PC-3 (cell line): ENCODE measurements at regions of chr19 and their contacts with region 1.

Region 1: DNA sequence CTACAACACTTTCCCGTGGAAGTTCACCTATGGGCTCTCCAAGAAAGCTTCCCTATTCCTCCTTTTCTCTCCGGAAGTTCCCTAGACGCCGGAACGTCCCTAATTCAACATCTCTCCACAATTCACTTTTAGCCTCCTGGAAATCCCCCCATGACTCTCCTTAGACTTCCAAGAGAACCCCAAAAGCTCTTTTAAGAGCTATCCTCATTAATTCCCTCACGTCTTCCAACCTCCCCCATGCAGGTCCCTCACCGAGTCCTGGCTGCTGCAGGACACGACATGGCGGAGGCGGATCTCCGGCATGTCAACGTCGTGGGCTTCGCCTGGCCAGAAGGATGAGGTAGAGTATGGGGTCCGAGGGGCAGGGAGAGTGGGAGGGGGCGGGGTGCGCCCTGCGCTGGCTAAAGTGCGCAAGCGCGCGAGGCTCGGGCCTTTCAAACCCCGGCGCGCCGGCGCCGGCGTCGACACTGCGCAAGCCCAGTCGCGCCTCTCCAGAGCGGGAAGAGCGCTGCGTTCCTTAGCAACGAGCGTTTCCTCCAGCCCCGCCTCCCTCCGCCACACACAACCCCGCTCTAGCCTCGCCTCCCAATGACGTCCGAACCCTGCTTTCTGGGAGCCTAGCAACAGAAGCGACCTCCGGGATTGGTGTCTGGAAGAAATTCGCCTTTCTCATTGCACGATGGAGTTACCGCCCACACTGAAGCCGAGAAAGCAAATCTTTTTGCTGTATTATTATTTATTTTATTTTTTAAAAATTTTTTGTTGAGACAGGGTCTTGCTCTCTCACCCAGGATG is at the starts of genes PINLYP and XRCC1:
- DNase-seq: peak; percentile 97
- ATAC-seq: peak; percentile 99
- H3K4me3 ChIP-seq: peak within 1 kb of the TSS; percentile 100
- H3K27ac ChIP-seq: peak within 1 kb of the TSS; percentile 57
- H3K4me1 ChIP-seq: peaks cover 9% of the 10 kb centered on the region
- H3K27me3 ChIP-seq: no peaks in the 10 kb centered on the region
- CTCF ChIP-seq: no peak
- total RNA-seq, gene PINLYP: 0.18 TPM in 1 of 2 replicates, not detected in the other
- total RNA-seq, gene XRCC1: 23.4 and 43.1 TPM in 2 replicates

Region 2: GRCh38 chr19:43503501-43504425 is 71.6 kb before region 1 on chr19:
- CTCF ChIA-PET with region 1: no interaction called
- POLR2A ChIA-PET with region 1: no interaction called
- intact Hi-C with region 1: no loop called
- DNase-seq: peak; percentile 91
- ATAC-seq: peak; percentile 92
- H3K4me3 ChIP-seq: peak overlapping the region; percentile 84
- H3K27ac ChIP-seq: no peak overlapping the region
- H3K4me1 ChIP-seq: 0 out of 2 replicates have a peak, but pooled peaks cover 9% of the 10 kb centered on the region
- H3K27me3 ChIP-seq: no peaks in the 10 kb centered on the region
- CTCF ChIP-seq: no peak; the same call in 1 of the 2 replicates

Region 3: GRCh38 chr19:43595999-43596841 is 20.9 kb after region 1 on chr19 and contains the starts of genes IRGQ and ZNF576:
- CTCF ChIA-PET with region 1: no interaction called
- POLR2A ChIA-PET with region 1: no interaction called
- intact Hi-C with region 1: loop called (anchors 1 kb)
- DNase-seq: peak; percentile 99
- ATAC-seq: peak; percentile 75
- H3K4me3 ChIP-seq: peak within 1 kb of the TSS; percentile 78
- H3K27ac ChIP-seq: peak within 1 kb of the TSS; percentile 80
- H3K4me1 ChIP-seq: peaks cover 14% of the 10 kb centered on the region
- H3K27me3 ChIP-seq: no peaks in the 10 kb centered on the region
- CTCF ChIP-seq: no peak
- total RNA-seq, gene IRGQ: 12.5 and 12.9 TPM in 2 replicates
- total RNA-seq, gene ZNF576: 10.9 and 14.7 TPM in 2 replicates

Region 4: GRCh38 chr19:43754503-43755255 is 179.3 kb after region 1 on chr19 and contains the start of gene SMG9:
- CTCF ChIA-PET with region 1: interaction called, 10 read pairs
- POLR2A ChIA-PET with region 1: no interaction called
- intact Hi-C with region 1: no loop called
- DNase-seq: peak; percentile 95
- ATAC-seq: peak; percentile 64
- H3K4me3 ChIP-seq: peak within 1 kb of the TSS; percentile 96
- H3K27ac ChIP-seq: peak within 1 kb of the TSS; percentile 99
- H3K4me1 ChIP-seq: peaks cover 66% of the 10 kb centered on the region
- H3K27me3 ChIP-seq: no peaks in the 10 kb centered on the region
- CTCF ChIP-seq: no peak
- total RNA-seq, gene SMG9: 48.8 and 49.1 TPM in 2 replicates